CD4-positive, alpha-beta memory T cell (primary cell): ENCODE measurements at regions of chr1 and their contacts with region 1.

Region 1: DNA sequence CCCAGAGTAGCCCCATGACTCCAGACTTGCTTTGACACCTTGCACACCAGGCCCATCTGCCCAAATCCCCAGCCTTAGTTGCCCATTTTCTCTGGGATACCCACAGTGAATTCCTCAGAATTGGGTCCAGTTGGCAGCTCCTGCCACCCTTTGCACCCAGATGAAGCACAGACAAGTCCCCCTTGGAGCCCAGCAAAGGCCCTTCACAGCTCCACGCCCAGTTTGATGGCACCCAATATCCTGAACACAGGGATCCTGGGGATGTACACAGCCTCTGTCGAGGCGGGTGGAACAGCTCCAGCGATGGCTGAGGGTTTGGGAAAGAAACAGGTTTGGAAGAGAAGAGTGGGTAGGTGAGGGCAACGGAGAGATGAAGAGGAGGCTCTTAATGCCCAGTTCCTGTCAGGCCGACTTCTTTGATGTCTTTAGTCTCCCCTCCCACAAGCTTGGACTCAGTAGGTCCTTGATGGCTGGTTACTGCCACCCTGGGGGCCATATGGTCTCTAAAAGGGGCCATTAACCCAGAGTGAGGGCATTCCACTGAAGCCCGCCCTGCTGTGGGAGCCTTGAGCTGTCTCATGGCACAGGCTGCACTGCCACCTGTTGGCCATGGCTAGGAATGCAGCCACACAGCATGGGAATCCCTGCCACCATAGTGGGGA is 21.7 kb downstream of the TMEM53 start:
- DNase-seq: peak; percentile 57 to 68 (median 64)
- H3K4me3 ChIP-seq: no peak overlapping the region
- H3K4me3 Mint-ChIP-seq: no peak overlapping the region
- H3K27ac ChIP-seq: no peak overlapping the region
- H3K27ac Mint-ChIP-seq: peak overlapping the region; percentile 30 to 64 (median 44)
- H3K4me1 ChIP-seq: no peaks in the 10 kb centered on the region
- H3K4me1 Mint-ChIP-seq: no peaks in the 10 kb centered on the region
- H3K27me3 ChIP-seq: no peaks in the 10 kb centered on the region
- H3K27me3 Mint-ChIP-seq: no peaks in the 10 kb centered on the region

Region 2: GRCh38 chr1:44213222-44214112 is 439.1 kb before region 1 on chr1 and contains the start of gene DMAP1:
- CTCF ChIA-PET with region 1: interaction called, 7 read pairs
- POLR2A ChIA-PET with region 1: no interaction called
- intact Hi-C with region 1: loop called (anchors 1 kb)
- DNase-seq: peak; percentile 82 to 87 (median 85)
- H3K4me3 ChIP-seq: peak within 1 kb of the TSS; percentile 92 to 99
- H3K4me3 Mint-ChIP-seq: peak within 1 kb of the TSS; percentile 92 to 98 (median 95)
- H3K27ac ChIP-seq: peak within 1 kb of the TSS; percentile 80
- H3K27ac Mint-ChIP-seq: peak within 1 kb of the TSS; percentile 94 to 98 (median 97)
- H3K4me1 ChIP-seq: peaks cover 32% of the 10 kb centered on the region
- H3K4me1 Mint-ChIP-seq: peaks cover 31 to 46% (median 39%) of the 10 kb centered on the region in 4 donors
- H3K27me3 ChIP-seq: no peaks in the 10 kb centered on the region
- H3K27me3 Mint-ChIP-seq: peaks cover 0 to 4% of the 10 kb centered on the region in 2 donors
- total RNA-seq, gene DMAP1: 81.7 to 82.6 TPM

Region 3: DNA sequence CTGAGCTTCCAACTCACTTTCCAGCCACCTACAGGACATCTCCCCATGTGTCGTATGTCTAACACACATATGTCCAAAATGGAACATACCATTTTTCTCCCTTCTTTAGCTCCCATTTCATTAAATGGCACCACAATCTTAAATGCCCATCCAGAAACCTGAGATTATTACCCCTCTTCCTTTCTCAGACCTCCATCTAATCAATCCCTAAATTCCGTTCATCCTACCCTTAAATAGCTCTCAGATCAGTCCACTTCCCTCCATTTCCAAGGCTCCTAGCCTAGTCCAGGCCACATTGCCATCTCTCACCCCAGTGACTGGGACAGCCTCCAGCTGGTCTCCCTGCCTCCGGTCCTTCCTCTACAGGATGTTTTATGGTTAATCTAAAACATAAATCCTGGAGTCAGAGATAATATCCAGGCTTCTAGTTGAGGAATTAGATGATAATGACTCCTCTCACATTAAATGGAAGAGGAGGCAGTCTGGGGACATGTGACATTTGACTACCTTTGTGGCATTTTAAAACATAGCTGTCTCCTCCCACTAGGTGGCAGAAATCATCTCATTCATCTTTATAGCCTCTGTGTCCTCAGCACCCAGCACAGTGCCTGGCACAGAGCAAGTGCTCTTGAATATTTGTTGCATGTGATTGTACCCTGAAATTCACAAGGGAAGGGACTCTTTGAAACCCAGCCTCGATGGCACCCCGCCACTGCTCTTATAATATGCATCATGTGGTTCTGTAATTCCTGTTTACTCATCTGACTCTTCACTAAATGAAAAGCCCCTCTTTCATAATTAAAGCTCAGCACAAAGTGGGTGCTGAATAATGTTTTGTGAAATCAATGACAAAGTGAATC is 80.6 kb before region 1 on chr1:
- CTCF ChIA-PET with region 1: interaction called, 153 read pairs
- POLR2A ChIA-PET with region 1: interaction called, 7 read pairs
- intact Hi-C with region 1: no loop called
- DNase-seq: peak in 4 of 5 donors; percentile 27 to 36 (median 30)
- H3K4me3 ChIP-seq: no peak overlapping the region
- H3K4me3 Mint-ChIP-seq: no peak overlapping the region
- H3K27ac ChIP-seq: no peak overlapping the region
- H3K27ac Mint-ChIP-seq: no peak overlapping the region
- H3K4me1 ChIP-seq: no peaks in the 10 kb centered on the region
- H3K4me1 Mint-ChIP-seq: no peaks in the 10 kb centered on the region
- H3K27me3 ChIP-seq: no peaks in the 10 kb centered on the region
- H3K27me3 Mint-ChIP-seq: peaks cover 7 to 25% of the 10 kb centered on the region in 2 donors

Region 4: DNA sequence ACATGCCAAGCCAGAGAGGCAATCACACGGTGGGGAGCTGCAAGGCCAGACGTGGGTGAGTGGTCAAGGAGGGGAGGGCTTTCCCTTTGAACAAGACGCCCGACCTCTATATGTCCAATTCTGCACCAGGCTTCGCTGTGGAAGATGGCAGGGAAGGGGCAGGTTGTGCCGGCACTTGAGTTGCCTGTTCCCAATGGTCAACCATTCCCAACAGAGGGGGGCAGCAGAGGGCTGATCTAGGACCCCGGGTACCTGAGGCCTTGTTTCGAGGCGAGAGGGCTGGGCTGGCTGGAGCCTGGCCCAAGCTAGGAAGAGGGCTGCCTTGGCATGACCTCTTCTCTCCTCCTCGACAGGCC is 43.2 kb before region 1 on chr1:
- CTCF ChIA-PET with region 1: interaction called, 67 read pairs
- POLR2A ChIA-PET with region 1: no interaction called
- intact Hi-C with region 1: loop called (anchors 1 kb)
- DNase-seq: no peak
- H3K4me3 ChIP-seq: no peak overlapping the region
- H3K4me3 Mint-ChIP-seq: no peak overlapping the region
- H3K27ac ChIP-seq: no peak overlapping the region
- H3K27ac Mint-ChIP-seq: no peak overlapping the region
- H3K4me1 ChIP-seq: no peaks in the 10 kb centered on the region
- H3K4me1 Mint-ChIP-seq: no peaks in the 10 kb centered on the region
- H3K27me3 ChIP-seq: no peaks in the 10 kb centered on the region
- H3K27me3 Mint-ChIP-seq: peaks cover 7 to 10% of the 10 kb centered on the region in 2 donors

Region 5: GRCh38 chr1:44636688-44637598 is 15.6 kb before region 1 on chr1:
- CTCF ChIA-PET with region 1: interaction called, 49 read pairs
- POLR2A ChIA-PET with region 1: interaction called, 20 read pairs
- intact Hi-C with region 1: no loop called
- DNase-seq: no peak
- H3K4me3 ChIP-seq: no peak overlapping the region
- H3K4me3 Mint-ChIP-seq: no peak overlapping the region
- H3K27ac ChIP-seq: no peak overlapping the region
- H3K27ac Mint-ChIP-seq: peak overlapping the region in 1 of 7 donors; percentile 27
- H3K4me1 ChIP-seq: peaks cover 27% of the 10 kb centered on the region
- H3K4me1 Mint-ChIP-seq: peaks cover 17 to 44% (median 27%) of the 10 kb centered on the region in 4 donors
- H3K27me3 ChIP-seq: no peaks in the 10 kb centered on the region
- H3K27me3 Mint-ChIP-seq: no peaks in the 10 kb centered on the region